HCT116 (cell line): ENCODE measurements at regions of chr17 and their contacts with region 1.

Region 1: DNA sequence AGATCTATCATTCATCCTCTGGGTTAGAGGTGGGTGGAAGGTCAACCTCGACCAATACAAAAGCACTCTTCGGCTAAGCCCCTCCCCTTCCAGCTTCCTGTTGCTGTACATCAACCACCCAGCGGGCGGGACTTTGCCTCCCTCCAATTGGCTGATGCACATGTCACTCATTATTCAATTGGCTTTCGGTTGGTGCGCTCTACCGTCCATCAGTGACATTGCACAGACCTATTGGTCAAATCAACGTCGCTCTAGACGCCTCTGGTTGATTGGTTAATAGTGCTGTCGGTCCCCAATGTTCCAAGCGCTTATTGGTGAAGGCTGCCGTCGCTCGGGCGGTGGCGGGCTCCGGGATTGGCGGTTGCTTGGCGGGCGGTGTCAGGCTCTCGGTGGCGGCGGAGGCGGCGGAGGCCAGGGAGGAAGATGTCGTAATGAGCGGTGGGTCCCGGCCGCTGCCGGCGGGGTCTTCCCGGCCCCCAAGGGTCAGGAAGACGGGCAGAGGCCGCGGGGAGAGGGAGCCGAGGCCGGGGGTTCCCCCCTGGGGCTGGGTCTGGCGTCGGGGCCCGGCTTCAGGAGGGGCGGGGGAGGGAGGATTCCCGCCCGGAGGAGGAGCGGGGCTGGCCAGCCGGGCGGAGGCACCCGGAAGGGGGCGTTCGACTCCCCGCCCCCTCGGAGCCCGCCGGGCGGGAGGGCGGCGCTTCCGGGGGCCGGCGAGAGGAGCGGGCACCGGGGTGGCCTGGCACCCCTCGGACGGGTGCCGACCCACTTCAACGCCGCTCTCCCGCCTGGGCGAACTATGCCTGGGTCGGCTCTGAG is at the start of gene SP2:
- DNase-seq: peak; percentile 100
- ATAC-seq: peak; percentile 92
- H3K4me3 ChIP-seq: peak within 1 kb of the TSS; percentile 84 to 87
- H3K27ac ChIP-seq: peak within 1 kb of the TSS; percentile 78
- H3K4me1 ChIP-seq: peaks cover 4 to 28% of the 10 kb centered on the region in 2 experiments; a peak in 3 of 4 replicates
- H3K27me3 ChIP-seq: no peaks in the 10 kb centered on the region
- CTCF ChIP-seq: no peak
- POLR2A ChIP-seq: peak; percentile 65
- RAD21 ChIP-seq: no peak
- total RNA-seq, gene SP2: 22.2 TPM

Region 2: GRCh38 chr17:47649153-47649971 is 246.7 kb before region 1 on chr17 and contains the start of gene KPNB1:
- CTCF ChIA-PET with region 1: no interaction called
- POLR2A ChIA-PET with region 1: no interaction called
- RAD21 ChIA-PET with region 1: interaction called in 1 of 2 experiments, 3 read pairs
- intact Hi-C with region 1: loop called (anchors 10 kb)
- DNase-seq: peak; percentile 100
- ATAC-seq: peak; percentile 86
- H3K4me3 ChIP-seq: peak within 1 kb of the TSS; percentile 78 to 83
- H3K27ac ChIP-seq: peak within 1 kb of the TSS; percentile 92
- H3K4me1 ChIP-seq: peaks cover 14 to 21% of the 10 kb centered on the region in 2 experiments; a peak in 3 of 4 replicates
- H3K27me3 ChIP-seq: no peaks in the 10 kb centered on the region
- CTCF ChIP-seq: no peak
- POLR2A ChIP-seq: peak; percentile 79
- RAD21 ChIP-seq: no peak
- total RNA-seq, gene KPNB1: 526 TPM

Region 3: DNA sequence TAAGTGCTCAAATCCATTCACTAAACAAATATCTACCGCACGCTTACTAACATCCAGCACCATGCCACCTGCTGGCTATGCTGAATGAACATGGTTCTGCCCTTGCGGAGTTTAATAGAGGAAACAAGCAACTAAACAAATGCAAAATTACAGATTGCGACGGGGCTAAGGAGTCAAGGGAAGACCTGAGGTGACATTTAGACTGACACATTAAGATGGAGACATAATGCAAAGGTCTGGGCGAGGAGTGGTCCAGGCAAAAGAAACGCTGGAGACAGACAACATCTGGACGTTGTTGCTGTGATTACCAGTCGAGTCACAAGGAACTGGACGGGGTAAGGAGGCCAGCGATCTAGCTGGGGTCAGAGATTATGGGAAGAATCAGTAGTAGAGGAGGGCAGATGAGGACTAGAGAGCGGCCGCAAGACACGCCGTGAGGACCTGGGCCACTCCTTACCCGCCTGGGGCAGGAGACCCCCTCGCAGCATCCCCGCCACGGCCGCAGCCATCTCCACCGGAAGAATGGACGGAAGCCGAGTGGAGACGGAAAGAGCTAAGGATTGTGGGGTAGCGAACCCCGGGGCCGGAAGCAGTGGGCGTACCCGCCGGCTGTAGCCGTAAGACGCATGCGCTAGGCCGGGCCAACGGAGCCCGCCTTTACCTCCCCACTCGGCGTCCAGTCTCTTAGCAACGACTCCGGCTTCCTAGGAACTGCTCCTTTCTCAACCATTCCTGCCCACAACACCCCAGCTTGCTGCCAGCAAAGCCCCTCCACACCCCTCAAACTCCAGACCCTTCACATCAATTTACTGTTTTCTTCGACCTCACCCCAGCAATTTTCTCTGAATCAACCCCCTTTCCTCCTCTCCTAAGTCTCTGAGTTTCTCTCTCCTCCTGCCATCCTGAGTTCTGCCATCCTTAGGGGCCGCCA is 64.8 kb before region 1 on chr17 and contains the starts of genes LRRC46 and MRPL10:
- CTCF ChIA-PET with region 1: interaction called, 10 read pairs
- POLR2A ChIA-PET with region 1: interaction called, 11 read pairs
- RAD21 ChIA-PET with region 1: no interaction called
- intact Hi-C with region 1: no loop called
- DNase-seq: peak; percentile 86
- ATAC-seq: peak; percentile 89
- H3K4me3 ChIP-seq: peak within 1 kb of the TSS; percentile 90 to 99
- H3K27ac ChIP-seq: peak within 1 kb of the TSS; percentile 64
- H3K4me1 ChIP-seq: peaks cover 14 to 20% of the 10 kb centered on the region in 2 experiments; a peak in 3 of 4 replicates
- H3K27me3 ChIP-seq: no peaks in the 10 kb centered on the region
- CTCF ChIP-seq: peak in 2 of 3 experiments; percentile 59 to 70; a peak in 5 of 6 replicates
- POLR2A ChIP-seq: peak; percentile 96
- RAD21 ChIP-seq: no peak; the same call in 1 of the 2 replicates
- total RNA-seq, gene LRRC46: 0.76 TPM
- total RNA-seq, gene MRPL10: 112 TPM

Region 4: GRCh38 chr17:47850692-47851573 is 45.1 kb before region 1 on chr17 and contains the start of gene SP6:
- CTCF ChIA-PET with region 1: interaction called, 393 read pairs
- POLR2A ChIA-PET with region 1: interaction called, 19 read pairs
- RAD21 ChIA-PET with region 1: no interaction called
- intact Hi-C with region 1: no loop called
- DNase-seq: peak; percentile 80
- ATAC-seq: peak; percentile 93
- H3K4me3 ChIP-seq: peak within 1 kb of the TSS; percentile 78 to 89
- H3K27ac ChIP-seq: peak within 1 kb of the TSS; percentile 63
- H3K4me1 ChIP-seq: peaks cover 13 to 30% of the 10 kb centered on the region in 2 experiments
- H3K27me3 ChIP-seq: peaks cover 13% of the 10 kb centered on the region; the same call in 1 of the 2 replicates
- CTCF ChIP-seq: peak in 1 of 3 experiments; percentile 39; a peak in 3 of 6 replicates
- POLR2A ChIP-seq: peak; percentile 97
- RAD21 ChIP-seq: no peak
- total RNA-seq, gene SP6: 10.8 TPM

Region 5: DNA sequence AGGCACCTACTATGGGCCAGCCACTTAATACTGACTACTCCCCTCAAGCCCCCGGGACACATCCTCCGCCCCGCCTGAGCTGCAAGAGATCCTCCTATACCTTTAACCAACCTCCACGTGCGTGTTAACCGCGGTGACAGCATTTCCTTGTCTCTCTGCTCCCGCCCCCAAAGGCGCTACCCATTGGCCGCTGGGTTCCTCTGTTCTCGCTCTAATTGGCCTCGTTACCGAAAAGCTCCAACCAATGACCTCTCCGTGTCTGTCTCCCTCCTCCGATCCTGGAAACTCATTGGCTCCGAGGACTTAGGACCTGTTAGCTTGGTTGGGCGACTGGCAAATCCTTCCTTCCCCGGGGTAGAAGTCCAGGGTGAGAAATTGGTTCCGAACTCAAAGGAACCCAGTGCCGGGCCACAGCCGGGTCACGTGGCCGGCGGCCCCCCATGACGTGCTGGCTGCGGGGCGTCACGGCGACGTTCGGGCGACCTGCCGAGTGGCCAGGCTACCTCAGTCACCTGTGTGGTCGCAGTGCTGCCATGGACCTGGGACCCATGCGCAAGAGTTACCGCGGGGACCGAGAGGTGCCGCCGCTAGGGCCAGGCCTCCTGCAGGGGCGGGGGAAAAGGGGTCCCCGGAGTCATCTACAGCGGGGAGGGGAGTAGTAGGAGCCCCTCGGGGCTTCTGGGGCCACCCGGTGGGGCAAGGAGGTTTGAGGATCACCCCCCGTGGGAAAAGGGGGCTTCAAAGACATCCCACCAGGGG is 45.4 kb after region 1 on chr17 and contains the start of gene PNPO:
- CTCF ChIA-PET with region 1: interaction called, 13 read pairs
- POLR2A ChIA-PET with region 1: interaction called, 19 read pairs
- RAD21 ChIA-PET with region 1: interaction called in 1 of 2 experiments, 4 read pairs
- intact Hi-C with region 1: loop called (anchors 2 kb)
- DNase-seq: peak; percentile 100
- ATAC-seq: peak; percentile 97
- H3K4me3 ChIP-seq: peak within 1 kb of the TSS; percentile 88 to 92
- H3K27ac ChIP-seq: peak within 1 kb of the TSS; percentile 81
- H3K4me1 ChIP-seq: peaks cover 24 to 53% of the 10 kb centered on the region in 2 experiments
- H3K27me3 ChIP-seq: no peaks in the 10 kb centered on the region
- CTCF ChIP-seq: peak in 1 of 3 experiments; percentile 24; a peak in 2 of 6 replicates
- POLR2A ChIP-seq: no peak
- RAD21 ChIP-seq: no peak
- total RNA-seq, gene PNPO: 74.9 TPM

Region 6: DNA sequence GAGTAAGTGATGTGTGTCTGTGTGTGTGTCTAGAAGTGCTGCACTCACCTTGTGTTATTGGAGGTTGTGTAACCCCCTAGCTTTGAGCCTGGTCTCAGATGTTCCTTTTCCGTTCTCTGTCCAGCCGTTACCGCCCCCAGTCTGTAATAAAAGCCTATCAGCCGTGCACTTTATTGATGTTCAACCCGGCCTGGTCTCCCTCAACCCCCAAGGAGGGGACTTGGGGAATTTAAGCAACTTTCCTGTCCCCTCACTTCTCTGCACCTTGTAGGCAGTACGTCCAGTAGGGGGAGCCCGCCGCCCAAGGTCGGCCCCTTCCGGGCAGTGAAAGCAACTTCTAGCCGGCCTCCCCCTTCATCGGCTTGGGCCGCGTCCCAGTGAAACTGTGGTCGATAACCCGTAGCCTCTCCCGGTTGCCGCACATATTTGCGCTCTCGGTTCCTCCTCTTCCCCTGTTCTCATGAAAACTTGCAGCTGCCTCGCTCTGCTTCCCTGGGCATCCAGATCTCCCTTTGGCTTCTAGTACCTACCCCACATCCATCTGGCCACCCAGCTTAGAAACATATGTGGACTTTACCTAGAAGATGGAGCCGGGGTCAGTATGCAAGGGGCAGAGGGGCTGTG is 53.2 kb after region 1 on chr17:
- CTCF ChIA-PET with region 1: interaction called, 13 read pairs
- POLR2A ChIA-PET with region 1: interaction called, 19 read pairs
- RAD21 ChIA-PET with region 1: interaction called in 1 of 2 experiments, 4 read pairs
- intact Hi-C with region 1: no loop called
- DNase-seq: peak; percentile 67
- ATAC-seq: peak; percentile 81
- H3K4me3 ChIP-seq: peak overlapping the region; percentile 29 to 40
- H3K27ac ChIP-seq: peak overlapping the region; percentile 67
- H3K4me1 ChIP-seq: peaks cover 30 to 51% of the 10 kb centered on the region in 2 experiments
- H3K27me3 ChIP-seq: no peaks in the 10 kb centered on the region
- CTCF ChIP-seq: peak; percentile 96 to 99 (median 98)
- POLR2A ChIP-seq: no peak
- RAD21 ChIP-seq: peak; percentile 97

Region 7: GRCh38 chr17:48241131-48241591 is 345.1 kb after region 1 on chr17:
- CTCF ChIA-PET with region 1: no interaction called
- POLR2A ChIA-PET with region 1: no interaction called
- RAD21 ChIA-PET with region 1: no interaction called
- intact Hi-C with region 1: no loop called
- DNase-seq: peak; percentile 88
- ATAC-seq: peak; percentile 79
- H3K4me3 ChIP-seq: peak overlapping the region in 1 of 2 experiments; percentile 7; a peak in 1 of 4 replicates
- H3K27ac ChIP-seq: peak overlapping the region; percentile 75
- H3K4me1 ChIP-seq: peaks cover 85 to 100% of the 10 kb centered on the region in 2 experiments
- H3K27me3 ChIP-seq: no peaks in the 10 kb centered on the region
- CTCF ChIP-seq: no peak
- POLR2A ChIP-seq: no peak
- RAD21 ChIP-seq: no peak